Activated T-helper 1 cell treated with anti-CD3 and anti-CD28 coated beads, Interleukin-12 subunit alpha, Interleukin-12 subunit beta, Interleukin-2, Interleukin-4 antibody, amounts not matched to agents 30 ng/mL and 10 ng/mL and 1 ng/mL, durations not matched to agents 14 hours and 24 hours and 36 hours (primary cell): ENCODE measurements at regions of chr2 and their contacts with region 1.

Region 1: DNA sequence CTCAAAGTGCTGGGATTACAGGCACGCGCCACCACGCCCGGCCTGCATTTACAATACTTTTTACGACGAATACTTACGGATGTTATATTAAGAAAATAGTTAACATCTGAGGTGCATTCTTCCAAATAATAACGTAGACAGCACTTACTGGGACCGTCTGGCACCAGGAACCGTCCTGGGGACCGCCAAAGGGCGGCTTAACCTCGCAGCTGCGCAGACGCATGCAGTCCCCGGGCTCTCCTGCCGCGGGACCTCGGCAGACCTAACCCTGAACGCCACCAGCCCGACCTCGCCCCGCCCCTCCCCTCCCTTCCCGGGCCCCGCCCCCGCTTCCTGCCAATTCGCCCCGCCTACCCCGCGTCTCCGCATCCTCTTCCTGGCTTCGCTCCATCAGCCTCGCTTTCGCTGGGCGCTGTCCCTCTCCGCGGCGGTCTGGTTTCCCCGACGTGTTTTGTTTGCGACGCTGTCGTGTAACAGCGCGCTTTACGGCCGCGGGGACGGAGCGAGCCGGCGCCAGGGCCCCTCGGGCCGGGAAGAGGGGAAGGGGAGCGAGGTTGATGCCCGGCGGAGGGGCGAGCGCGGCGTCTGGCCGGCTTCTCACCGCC is at the start of gene CNOT11:
- DNase-seq: peak; percentile 97
- H3K4me3 Mint-ChIP-seq: peak within 1 kb of the TSS; percentile 99
- H3K27ac Mint-ChIP-seq: peak within 1 kb of the TSS; percentile 98
- H3K4me1 Mint-ChIP-seq: peaks cover 57% of the 10 kb centered on the region
- H3K27me3 Mint-ChIP-seq: no peaks in the 10 kb centered on the region
- total RNA-seq, gene CNOT11: 70.6 and 74.7 TPM in 2 replicates

Region 2: GRCh38 chr2:99337113-99338028 is 1915.1 kb before region 1 on chr2 and contains the start of gene EIF5B:
- intact Hi-C with region 1: loop called (anchors 5 kb)
- DNase-seq: peak; percentile 93
- H3K4me3 Mint-ChIP-seq: no peak within 1 kb of the TSS
- H3K27ac Mint-ChIP-seq: no peak within 1 kb of the TSS
- H3K4me1 Mint-ChIP-seq: peaks cover 47% of the 10 kb centered on the region
- H3K27me3 Mint-ChIP-seq: no peaks in the 10 kb centered on the region
- total RNA-seq, gene EIF5B: 84.7 and 84.8 TPM in 2 replicates

Region 3: DNA sequence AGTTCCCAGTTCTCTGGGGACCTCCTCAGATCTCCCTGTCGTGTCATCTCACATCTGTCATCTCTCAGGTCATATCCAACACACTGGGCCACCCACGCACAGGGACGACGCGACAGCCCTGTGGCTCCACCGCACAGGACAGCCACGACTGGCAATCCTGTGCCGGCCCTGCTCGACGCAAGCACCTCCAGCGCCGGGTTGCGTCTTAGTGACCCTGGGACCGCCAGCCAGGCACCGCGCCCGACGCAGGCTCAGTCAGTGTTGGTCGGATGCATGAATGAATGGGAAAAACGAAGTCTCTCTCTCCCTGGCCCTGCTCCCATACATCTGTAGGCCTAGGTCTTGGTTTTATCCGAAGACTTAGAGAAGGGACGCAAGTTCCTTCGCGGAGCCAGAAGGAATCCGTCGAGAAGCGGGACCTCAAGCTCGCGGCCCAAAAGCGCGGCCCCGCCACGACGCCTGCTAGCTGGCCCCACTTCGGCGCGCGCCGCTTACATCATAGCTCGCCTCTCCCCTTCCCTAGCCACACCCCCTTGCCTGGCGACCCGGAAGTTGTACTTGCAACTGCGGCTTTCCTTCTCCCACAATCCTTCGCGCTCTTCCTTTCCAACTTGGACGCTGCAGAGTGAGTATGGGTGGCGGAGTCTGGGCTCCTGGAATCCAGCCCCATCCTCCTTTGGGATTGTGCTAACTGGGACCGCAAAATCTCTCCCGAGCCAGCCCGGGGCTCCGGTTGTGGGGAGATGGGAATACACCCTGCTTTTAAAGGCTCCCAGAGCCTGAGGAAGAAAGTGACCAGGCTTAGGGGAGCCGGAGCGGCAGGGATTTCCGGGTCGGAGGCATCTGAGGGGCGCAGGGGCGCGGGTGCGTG is 250.6 kb before region 1 on chr2 and contains the start of gene RPL31:
- intact Hi-C with region 1: loop called (anchors 1 kb)
- DNase-seq: peak; percentile 95
- H3K4me3 Mint-ChIP-seq: peak within 1 kb of the TSS; percentile 100
- H3K27ac Mint-ChIP-seq: peak within 1 kb of the TSS; percentile 95
- H3K4me1 Mint-ChIP-seq: peaks cover 46% of the 10 kb centered on the region
- H3K27me3 Mint-ChIP-seq: peaks cover 6% of the 10 kb centered on the region
- total RNA-seq, gene RPL31: 1,048 and 1,092 TPM in 2 replicates

Region 4: GRCh38 chr2:101264360-101264939 is 11.9 kb after region 1 on chr2:
- intact Hi-C with region 1: loop called (anchors 1 kb)
- DNase-seq: no peak
- H3K4me3 Mint-ChIP-seq: no peak overlapping the region
- H3K27ac Mint-ChIP-seq: peak overlapping the region; percentile 31
- H3K4me1 Mint-ChIP-seq: peaks cover 61% of the 10 kb centered on the region
- H3K27me3 Mint-ChIP-seq: no peaks in the 10 kb centered on the region

Region 5: GRCh38 chr2:101387151-101387807 is 134.8 kb after region 1 on chr2 and contains the start of gene CREG2:
- intact Hi-C with region 1: loop called (anchors 5 kb)
- DNase-seq: peak; percentile 56
- H3K4me3 Mint-ChIP-seq: peak within 1 kb of the TSS; percentile 65
- H3K27ac Mint-ChIP-seq: no peak within 1 kb of the TSS
- H3K4me1 Mint-ChIP-seq: peaks cover 11% of the 10 kb centered on the region
- H3K27me3 Mint-ChIP-seq: peaks cover 64% of the 10 kb centered on the region
- total RNA-seq, gene CREG2: not detected in 2 replicates

Region 6: DNA sequence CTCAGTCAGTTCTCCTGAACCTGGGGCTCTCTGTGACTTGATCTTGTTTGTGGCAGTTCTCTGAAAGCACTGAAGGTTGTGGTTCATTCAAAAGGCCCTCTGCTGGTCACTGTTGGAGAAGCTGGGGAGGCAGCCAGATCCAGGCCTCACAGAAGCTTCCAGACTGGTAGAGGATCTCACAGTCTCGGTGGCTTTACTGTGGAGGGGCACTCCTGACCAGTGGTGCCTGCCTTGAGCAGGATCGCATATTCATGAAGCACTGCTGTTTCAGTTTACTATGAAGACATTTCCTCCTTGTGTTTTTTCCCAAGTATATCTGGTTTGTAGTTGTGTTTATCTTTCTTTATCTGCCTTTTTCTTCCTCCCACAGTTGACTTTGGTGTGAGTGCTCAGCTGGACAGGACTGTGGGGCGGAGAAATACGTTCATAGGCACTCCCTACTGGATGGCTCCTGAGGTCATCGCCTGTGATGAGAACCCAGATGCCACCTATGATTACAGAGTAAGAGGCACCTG is 578.9 kb after region 1 on chr2:
- intact Hi-C with region 1: loop called (anchors 5 kb)
- DNase-seq: peak; percentile 46
- H3K4me3 Mint-ChIP-seq: peak overlapping the region; percentile 32
- H3K27ac Mint-ChIP-seq: peak overlapping the region; percentile 92
- H3K4me1 Mint-ChIP-seq: peaks cover 54% of the 10 kb centered on the region
- H3K27me3 Mint-ChIP-seq: no peaks in the 10 kb centered on the region